AG04449 (cell line): ENCODE measurements at regions of chr1 and their contacts with region 1.

Region 1: GRCh38 chr1:151739590-151740375 is 18.5 kb downstream of the RIIAD1 start:
- DNase-seq: no peak
- H3K4me3 ChIP-seq: no peak overlapping the region
- CTCF ChIP-seq: no peak

Region 2: DNA sequence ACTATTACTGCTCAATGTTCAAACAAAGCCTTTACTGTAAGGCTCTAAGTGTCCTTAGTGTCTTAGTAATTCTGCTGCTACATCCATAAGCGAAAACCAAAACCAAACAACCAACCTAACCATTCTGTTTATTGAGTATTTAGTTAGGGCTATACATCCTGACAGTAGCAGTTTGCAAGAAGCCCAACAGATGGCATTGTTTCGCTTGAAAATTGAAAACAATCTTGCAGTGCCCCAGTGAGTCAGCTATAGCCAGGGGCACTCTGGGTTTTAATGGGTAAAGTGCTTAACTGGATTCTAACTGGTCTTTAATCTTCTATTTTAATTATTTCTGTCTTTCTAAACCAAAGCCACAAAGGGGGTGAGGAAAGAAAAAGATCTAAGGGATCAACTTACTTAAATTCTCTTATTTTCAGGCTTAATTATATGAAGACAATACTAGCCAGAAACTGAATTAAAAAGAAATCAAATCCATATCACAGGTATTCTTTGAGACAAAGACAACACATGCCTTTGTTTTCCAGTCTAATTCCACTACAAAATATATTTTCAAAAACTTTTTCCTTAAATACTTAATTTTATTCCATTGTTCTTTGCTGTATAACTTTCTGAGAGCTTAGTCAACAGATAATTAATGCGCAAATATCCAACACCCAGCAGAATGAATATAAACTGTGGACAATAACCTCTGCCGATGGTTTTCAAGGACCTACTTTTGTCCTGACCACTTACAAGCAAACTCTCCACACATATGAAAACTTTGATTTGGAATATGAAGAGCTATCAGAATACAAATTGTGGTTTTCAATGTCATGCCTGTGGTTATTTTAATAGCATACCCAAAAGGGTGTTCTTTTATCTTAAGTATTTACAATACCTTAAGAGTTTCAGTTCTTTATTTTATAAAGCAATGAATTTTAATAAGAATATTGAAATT is 295.7 kb before region 1 on chr1:
- CTCF ChIA-PET with region 1: interaction called, 20 read pairs
- POLR2A ChIA-PET with region 1: interaction called, 3 read pairs
- DNase-seq: peak; percentile 52
- H3K4me3 ChIP-seq: no peak overlapping the region
- CTCF ChIP-seq: peak; percentile 69

Region 3: DNA sequence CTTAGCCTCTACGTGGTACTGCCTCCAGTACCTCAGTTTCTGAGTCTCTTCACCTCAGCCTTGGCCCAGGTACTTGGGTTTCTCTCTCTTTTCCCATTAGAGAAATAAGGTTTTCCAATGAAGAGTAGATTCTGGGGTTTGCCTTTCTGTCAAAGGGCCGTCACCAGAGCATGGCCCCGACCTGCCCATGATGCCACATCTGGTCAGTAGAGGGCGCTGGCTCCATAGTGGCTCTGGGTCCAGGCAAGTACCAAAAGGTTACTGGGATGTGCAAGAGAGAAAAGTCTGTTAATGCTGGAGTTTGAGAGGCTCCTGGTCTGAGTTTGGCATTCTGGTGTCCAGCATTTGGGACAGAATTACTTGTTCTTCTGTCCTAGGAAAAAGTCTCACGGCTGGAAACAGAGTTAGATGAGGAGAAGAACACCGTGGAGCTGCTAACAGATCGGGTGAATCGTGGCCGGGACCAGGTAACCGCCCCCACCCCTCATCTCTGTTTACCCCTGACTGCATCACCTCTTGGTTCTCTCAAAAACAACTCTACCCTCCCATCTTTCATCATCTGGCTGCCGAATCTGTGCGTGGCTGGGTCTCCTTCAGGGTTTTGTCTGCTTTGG is 205.0 kb before region 1 on chr1:
- CTCF ChIA-PET with region 1: interaction called, 21 read pairs
- POLR2A ChIA-PET with region 1: no interaction called
- DNase-seq: no peak
- H3K4me3 ChIP-seq: no peak overlapping the region
- CTCF ChIP-seq: peak; percentile 94

Region 4: GRCh38 chr1:151611832-151612500 is 127.8 kb before region 1 on chr1 and contains the start of gene SNX27:
- CTCF ChIA-PET with region 1: no interaction called
- POLR2A ChIA-PET with region 1: no interaction called
- DNase-seq: peak; percentile 54
- H3K4me3 ChIP-seq: peak within 1 kb of the TSS; percentile 80
- CTCF ChIP-seq: no peak

Region 5: GRCh38 chr1:151867785-151868411 is 128.1 kb after region 1 on chr1:
- CTCF ChIA-PET with region 1: no interaction called
- POLR2A ChIA-PET with region 1: no interaction called
- DNase-seq: peak; percentile 33
- H3K4me3 ChIP-seq: no peak overlapping the region
- CTCF ChIP-seq: no peak